ENCODE measurements at regions of chr1 and their contacts with region 1.

Region 1: DNA sequence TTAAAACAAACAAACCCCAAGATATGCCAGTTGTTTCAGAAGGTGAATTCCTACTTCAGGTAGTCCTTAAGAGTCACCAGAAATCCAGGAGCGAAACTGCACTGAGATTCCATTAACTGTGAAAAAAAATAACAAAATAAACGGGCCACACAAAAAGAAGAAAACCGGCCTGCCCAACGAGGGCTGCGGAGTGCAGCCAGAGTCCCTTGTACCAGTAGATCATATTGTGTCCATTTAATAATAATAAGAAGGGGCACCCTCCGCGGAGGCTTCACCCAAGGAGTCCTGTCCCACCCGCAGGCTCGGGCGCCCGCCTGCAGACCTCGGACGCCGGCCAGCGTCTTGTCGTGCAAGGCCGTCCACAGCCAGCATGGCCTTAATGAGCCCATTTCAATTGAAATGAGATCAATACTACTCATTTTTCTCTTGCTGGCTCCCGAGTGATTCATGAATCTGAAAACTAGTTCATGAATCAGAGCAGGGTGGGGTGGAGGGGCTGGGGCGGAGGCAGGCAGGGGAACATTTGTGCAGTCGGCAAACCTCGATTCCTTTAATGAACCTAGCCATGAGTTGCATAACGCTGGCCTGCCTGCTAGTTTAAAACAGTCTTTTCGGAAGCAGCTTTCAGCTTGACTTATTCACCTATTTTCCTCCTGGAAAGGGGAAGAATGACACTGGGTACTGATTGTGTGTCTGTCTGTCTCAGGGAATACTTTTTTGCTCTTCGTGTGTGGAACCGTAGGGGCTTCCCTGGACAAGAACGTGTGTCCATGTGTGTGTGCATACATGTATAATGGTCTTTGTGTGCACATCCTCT is 113.1 kb upstream of the IRF2BP2 start:
- DNase-seq: no peak

Region 2: GRCh38 chr1:234499119-234499942 is 223.8 kb before region 1 on chr1:
- intact Hi-C with region 1: loop called (anchors 2 kb)
- DNase-seq: peak; percentile 96

Region 3: DNA sequence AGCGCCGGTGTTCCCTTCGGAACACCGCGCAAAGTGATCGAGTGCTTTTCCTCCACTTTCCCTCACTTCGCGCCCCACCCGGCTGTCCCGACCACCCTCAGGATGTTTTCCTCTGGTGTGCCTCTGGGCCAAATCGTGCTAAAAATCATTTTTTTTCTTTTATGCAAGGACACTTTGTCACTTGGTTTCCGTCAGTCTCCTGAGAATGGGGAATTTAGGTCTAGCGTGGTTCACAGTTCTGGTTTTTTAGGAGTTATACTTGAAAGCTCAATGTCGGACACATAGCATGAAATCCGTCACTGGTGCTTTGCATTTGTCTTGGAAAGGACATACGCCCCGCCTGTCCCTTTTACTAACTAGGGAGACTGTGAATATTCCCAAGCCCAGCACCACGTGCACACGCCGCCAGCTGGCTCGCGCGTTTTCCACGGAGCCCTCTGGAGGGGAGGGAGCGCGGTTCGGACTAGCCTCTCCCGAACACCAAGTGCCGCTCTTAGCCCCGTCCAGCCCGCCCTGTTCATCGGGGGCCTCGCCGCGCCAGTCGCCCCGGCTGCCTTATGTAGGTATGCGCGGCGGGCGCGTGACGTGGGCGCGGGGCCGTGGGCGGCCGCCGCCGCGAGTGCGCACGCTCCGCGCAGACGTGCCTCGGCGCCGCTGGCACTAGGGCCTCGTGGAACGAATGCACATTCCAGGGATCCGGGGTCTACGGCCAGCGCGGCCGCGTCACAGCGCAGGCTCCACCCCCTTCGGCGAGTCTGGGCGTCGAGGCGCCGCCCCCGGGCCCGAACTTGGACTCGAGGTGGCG is 112.6 kb before region 1 on chr1:
- intact Hi-C with region 1: loop called (anchors 1 kb)
- DNase-seq: peak; percentile 97

Region 4: GRCh38 chr1:234772345-234773147 is 49.4 kb after region 1 on chr1:
- intact Hi-C with region 1: loop called (anchors 2 kb)
- DNase-seq: peak; percentile 85

Region 5: GRCh38 chr1:234851450-234852438 is 128.6 kb after region 1 on chr1:
- intact Hi-C with region 1: no loop called
- DNase-seq: no peak

Region 6: DNA sequence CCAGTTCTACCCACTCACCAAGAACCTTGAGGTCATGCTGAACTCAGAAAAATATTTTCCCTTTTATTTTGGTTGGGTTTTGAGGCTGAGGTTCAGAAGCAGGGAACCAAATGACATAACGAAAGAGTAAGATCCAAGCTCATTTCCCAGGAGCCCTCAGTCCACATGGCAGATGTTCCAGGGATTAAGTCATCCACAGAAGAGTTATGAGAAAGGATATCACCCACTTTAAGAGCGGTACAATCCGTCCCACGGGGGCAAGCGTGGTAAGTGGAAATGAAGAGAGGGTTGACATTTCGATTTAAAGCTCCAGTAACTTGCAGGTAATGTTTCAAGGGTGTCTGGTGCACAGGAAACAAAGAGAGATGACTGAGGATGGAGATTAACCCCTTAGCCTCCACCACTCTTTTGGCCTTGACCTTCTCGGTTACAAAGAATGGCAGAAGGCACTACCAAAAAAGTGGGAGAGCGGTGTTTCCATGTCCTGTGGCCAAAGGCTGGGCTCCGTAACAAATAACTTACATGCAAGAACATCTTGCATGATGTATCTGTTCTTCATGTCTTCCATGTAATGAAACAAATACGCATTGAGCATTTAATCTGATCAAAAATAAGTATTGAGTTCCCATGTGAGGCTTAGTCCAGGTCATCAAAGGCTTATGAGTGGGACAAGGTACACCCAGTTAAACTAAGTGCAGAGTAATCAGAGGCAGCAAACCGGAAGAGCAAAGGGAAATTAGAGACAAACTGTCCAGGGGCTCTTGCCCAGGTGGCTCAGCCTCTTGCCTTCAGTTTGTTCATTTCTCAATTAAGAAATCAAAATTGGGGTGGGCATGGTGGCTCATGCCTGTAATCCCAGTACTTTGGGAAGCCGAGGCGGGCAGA is 164.1 kb after region 1 on chr1:
- intact Hi-C with region 1: loop called (anchors 1 kb)
- DNase-seq: no peak

Region 7: DNA sequence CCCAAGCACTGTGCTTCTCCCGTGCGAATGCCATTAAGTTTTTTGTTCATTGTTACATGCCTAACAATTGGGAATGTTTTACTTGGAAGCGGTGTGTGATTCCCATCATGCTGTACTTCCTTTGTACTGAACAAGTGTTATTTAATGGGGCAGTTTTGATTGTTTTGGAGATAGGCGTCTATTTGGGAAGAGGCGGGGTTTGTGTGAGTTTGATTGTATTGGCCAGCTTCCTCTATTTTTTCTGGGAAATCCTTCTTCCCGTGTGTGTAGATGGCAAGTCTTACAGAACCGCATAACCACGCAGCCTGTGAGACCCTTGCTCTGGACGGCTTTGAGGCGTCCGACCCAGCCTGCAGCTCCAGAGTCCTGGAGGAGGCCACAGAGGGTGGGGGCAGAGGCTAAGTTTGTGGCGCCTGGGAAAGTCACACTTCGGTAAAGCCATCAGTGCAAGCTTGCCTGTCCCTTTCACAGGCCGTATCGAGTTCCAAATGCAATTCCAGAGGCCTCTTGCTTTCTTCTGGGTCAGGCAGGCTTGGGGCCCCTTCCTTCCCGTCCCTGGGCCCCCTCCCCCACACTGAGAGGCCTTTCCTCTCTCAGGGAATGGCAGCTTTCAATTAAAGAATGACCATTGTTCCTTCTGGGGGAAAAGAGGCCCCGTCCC is 195.2 kb after region 1 on chr1:
- intact Hi-C with region 1: loop called (anchors 1 kb)
- DNase-seq: peak; percentile 75

Region 8: GRCh38 chr1:234955107-234955731 is 232.1 kb after region 1 on chr1:
- intact Hi-C with region 1: no loop called
- DNase-seq: peak; percentile 86

Region 9: GRCh38 chr1:234997201-234997895 is 274.2 kb after region 1 on chr1:
- intact Hi-C with region 1: loop called (anchors 2 kb)
- DNase-seq: peak; percentile 97